Common myeloid progenitor, CD34-positive (primary cell): ENCODE measurements at regions of chr17 and their contacts with region 1.

Region 1: DNA sequence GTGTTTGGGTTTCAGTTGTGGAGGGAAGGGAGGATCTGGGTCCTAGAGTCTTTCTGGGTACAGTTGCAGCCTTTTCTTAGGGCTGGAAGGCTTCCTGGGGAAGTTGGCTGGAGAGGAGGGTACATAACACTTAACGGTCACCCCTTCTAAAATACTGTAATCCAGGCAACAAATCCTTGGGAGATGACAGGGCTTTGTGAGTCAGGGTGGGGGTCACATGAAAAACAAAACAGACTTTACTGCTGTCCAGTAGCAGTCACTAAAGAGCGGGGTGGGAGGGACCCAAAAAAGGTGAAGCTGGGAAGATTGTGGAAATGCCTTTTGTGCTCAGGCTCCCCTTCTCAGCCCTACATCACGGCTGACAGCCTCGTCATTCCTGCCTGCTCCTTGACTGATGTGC is 6.3 kb downstream of the SAP30BP start:
- DNase-seq: no peak
- H3K4me3 ChIP-seq: no peak overlapping the region
- H3K27ac ChIP-seq: no peak overlapping the region
- H3K4me1 ChIP-seq: peaks cover 0 to 4% (median under 1%) of the 10 kb centered on the region in 4 experiments
- H3K27me3 ChIP-seq: no peaks in the 10 kb centered on the region

Region 2: GRCh38 chr17:75557075-75557882 is 116.2 kb before region 1 on chr17:
- CTCF ChIA-PET with region 1: no interaction called
- POLR2A ChIA-PET with region 1: no interaction called
- DNase-seq: no peak
- H3K4me3 ChIP-seq: no peak overlapping the region
- H3K27ac ChIP-seq: no peak overlapping the region
- H3K4me1 ChIP-seq: peaks cover 0 to 11% (median 0%) of the 10 kb centered on the region in 4 experiments
- H3K27me3 ChIP-seq: no peaks in the 10 kb centered on the region

Region 3: DNA sequence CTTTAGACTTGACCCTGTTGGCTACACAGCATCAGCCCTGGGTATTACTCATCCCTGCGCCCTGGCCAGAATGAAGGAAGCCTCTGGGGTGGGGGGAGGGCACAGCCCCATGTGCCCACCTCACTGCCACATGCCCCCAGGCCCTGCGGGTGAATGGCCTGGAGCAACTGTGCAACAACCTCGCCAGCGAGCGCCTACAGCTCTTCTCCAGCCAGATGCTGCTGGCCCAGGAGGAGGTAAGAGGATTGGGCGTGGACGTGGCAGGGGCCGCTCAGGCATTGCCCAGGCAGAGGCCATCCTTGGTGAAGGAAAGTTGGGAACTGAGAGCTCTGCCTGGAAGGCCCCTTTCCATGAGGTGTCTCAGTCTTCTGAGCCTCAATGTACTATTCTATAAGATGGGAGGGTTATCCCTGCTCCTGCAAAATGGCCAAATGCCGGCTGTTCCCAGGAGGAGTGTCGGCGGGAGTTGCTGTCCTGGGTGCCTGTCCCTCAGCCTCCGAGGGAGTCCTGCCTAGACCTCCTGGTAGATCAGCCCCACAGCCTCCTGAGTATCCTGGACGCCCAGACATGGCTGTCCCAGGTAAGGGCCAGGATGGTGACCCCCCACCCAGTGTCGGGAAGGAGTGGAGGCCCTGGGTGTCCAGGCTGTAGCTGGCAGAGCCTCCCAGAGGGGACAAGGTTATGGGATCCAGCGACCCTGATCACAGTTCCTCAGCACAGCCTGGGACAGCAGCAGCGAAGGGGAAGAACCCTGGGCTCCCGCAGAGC is 77.0 kb before region 1 on chr17:
- CTCF ChIA-PET with region 1: no interaction called
- POLR2A ChIA-PET with region 1: no interaction called
- DNase-seq: no peak
- H3K4me3 ChIP-seq: no peak overlapping the region
- H3K27ac ChIP-seq: no peak overlapping the region
- H3K4me1 ChIP-seq: no peaks in the 10 kb centered on the region
- H3K27me3 ChIP-seq: no peaks in the 10 kb centered on the region

Region 4: DNA sequence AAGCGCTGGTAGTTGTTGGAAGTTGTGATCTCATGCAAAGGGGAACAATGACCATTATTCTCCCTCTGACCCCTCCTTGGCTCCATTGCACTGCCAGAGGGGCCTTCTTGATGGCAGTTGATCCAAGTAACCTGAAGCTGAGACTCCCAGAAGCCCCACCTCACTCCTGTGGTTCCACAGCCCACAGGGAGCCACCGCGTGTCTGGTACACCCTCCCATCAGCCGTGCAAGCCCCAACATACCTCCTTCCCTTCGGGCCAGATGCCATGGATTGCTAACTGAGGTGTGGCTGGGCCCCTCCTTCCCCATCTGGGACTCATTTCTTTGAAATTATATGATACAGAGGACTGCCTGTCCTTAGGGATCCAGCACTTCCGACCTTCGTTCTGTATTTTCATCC is 11.4 kb after region 1 on chr17:
- CTCF ChIA-PET with region 1: interaction called, 18 read pairs
- POLR2A ChIA-PET with region 1: no interaction called
- DNase-seq: no peak
- H3K4me3 ChIP-seq: no peak overlapping the region
- H3K27ac ChIP-seq: no peak overlapping the region
- H3K4me1 ChIP-seq: peaks cover 12 to 34% (median 25%) of the 10 kb centered on the region in 4 experiments
- H3K27me3 ChIP-seq: no peaks in the 10 kb centered on the region

Region 5: GRCh38 chr17:75693500-75694481 is 20.3 kb after region 1 on chr17:
- CTCF ChIA-PET with region 1: interaction called, 18 read pairs
- POLR2A ChIA-PET with region 1: interaction called, 3 read pairs
- DNase-seq: no peak
- H3K4me3 ChIP-seq: no peak overlapping the region
- H3K27ac ChIP-seq: peak overlapping the region in 1 of 2 experiments; percentile 2
- H3K4me1 ChIP-seq: peaks cover 7 to 32% (median 27%) of the 10 kb centered on the region in 4 experiments
- H3K27me3 ChIP-seq: no peaks in the 10 kb centered on the region

Region 6: GRCh38 chr17:76370261-76370993 is 696.9 kb after region 1 on chr17:
- CTCF ChIA-PET with region 1: no interaction called
- POLR2A ChIA-PET with region 1: no interaction called
- DNase-seq: peak in 1 of 3 donors; percentile 14
- H3K4me3 ChIP-seq: no peak overlapping the region
- H3K27ac ChIP-seq: no peak overlapping the region
- H3K4me1 ChIP-seq: peaks cover 0 to 5% (median 4%) of the 10 kb centered on the region in 4 experiments
- H3K27me3 ChIP-seq: no peaks in the 10 kb centered on the region